IMR-90 (cell line): ENCODE measurements at regions of chr5 and their contacts with region 1.

Region 1: GRCh38 chr5:124748687-124749594 is 2.5 kb upstream of the ZNF608 start:
- DNase-seq: peak; percentile 91
- ATAC-seq: peak; percentile 79
- H3K4me3 ChIP-seq: peak overlapping the region; percentile 67
- H3K27ac ChIP-seq: peak overlapping the region; percentile 86
- H3K4me1 ChIP-seq: no peaks in the 10 kb centered on the region
- H3K27me3 ChIP-seq: no peaks in the 10 kb centered on the region
- CTCF ChIP-seq: no peak
- POLR2A ChIP-seq: no peak
- RAD21 ChIP-seq: 0 out of 2 replicates have a peak, but pooled peaks have one; percentile 10

Region 2: DNA sequence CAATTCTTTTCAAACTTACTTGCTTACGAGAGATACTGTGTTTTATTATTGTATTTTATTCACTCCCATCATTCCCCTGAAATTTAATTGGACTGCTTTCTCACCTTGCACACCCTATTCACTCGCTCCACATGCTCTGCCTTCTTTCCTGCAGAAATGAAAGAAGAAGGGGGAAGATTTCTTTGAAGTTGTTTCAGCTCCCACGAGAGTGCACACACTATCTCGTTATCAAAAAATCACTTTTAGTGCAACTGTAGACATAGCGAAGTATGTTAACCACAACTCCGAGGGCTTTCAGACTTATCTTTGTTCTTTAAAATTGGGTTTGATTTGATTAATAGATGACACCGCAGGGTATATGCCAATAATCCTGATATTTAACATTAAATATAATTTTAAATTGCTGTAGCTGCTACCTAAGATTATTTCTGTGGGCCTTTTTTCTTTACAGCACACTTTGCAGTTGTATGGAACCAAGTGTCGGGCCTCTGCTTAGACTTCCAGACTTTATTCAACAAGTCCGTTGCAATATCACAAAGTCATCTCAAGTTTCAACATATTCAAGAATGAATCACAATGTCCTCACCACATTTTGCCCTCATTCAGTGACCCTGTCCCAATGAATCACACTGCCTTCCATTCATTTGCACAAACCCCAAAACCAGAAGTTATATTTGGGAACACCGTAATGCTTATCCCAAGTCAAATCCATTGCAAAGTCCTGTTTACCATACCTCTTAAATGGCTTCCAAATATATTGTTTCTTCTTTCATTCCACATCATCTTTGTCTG is 797.6 kb before region 1 on chr5:
- CTCF ChIA-PET with region 1: no interaction called
- POLR2A ChIA-PET with region 1: no interaction called
- dilution Hi-C with region 1: no loop called
- in situ Hi-C with region 1: no loop called
- intact Hi-C with region 1: loop called (anchors 5 kb)
- DNase-seq: peak; percentile 96
- ATAC-seq: peak; percentile 94
- H3K4me3 ChIP-seq: no peak overlapping the region
- H3K27ac ChIP-seq: no peak overlapping the region
- H3K4me1 ChIP-seq: peaks cover 2% of the 10 kb centered on the region; the same call in 1 of the 2 replicates
- H3K27me3 ChIP-seq: no peaks in the 10 kb centered on the region; the same call in 1 of the 2 replicates
- CTCF ChIP-seq: no peak
- POLR2A ChIP-seq: no peak
- RAD21 ChIP-seq: no peak

Region 3: GRCh38 chr5:124453221-124454051 is 295.5 kb before region 1 on chr5:
- CTCF ChIA-PET with region 1: no interaction called
- POLR2A ChIA-PET with region 1: no interaction called
- dilution Hi-C with region 1: no loop called
- in situ Hi-C with region 1: loop called (anchors 10 kb)
- intact Hi-C with region 1: loop called (anchors 5 kb)
- DNase-seq: peak; percentile 89
- ATAC-seq: peak; percentile 60
- H3K4me3 ChIP-seq: no peak overlapping the region
- H3K27ac ChIP-seq: 0 out of 2 replicates have a peak overlapping the region, but pooled peaks have one; percentile 34
- H3K4me1 ChIP-seq: peaks cover 16% of the 10 kb centered on the region
- H3K27me3 ChIP-seq: peaks cover 5% of the 10 kb centered on the region
- CTCF ChIP-seq: no peak
- POLR2A ChIP-seq: no peak
- RAD21 ChIP-seq: no peak

Region 4: GRCh38 chr5:124655922-124656511 is 92.9 kb before region 1 on chr5:
- CTCF ChIA-PET with region 1: no interaction called
- POLR2A ChIA-PET with region 1: interaction called, 3 read pairs
- dilution Hi-C with region 1: no loop called
- in situ Hi-C with region 1: no loop called
- intact Hi-C with region 1: loop called (anchors 1 kb)
- DNase-seq: peak; percentile 94
- ATAC-seq: peak; percentile 43
- H3K4me3 ChIP-seq: peak overlapping the region; percentile 11; the same call in 1 of the 2 replicates
- H3K27ac ChIP-seq: peak overlapping the region; percentile 88
- H3K4me1 ChIP-seq: peaks cover 29% of the 10 kb centered on the region
- H3K27me3 ChIP-seq: no peaks in the 10 kb centered on the region
- CTCF ChIP-seq: no peak
- POLR2A ChIP-seq: no peak
- RAD21 ChIP-seq: peak; percentile 37

Region 5: DNA sequence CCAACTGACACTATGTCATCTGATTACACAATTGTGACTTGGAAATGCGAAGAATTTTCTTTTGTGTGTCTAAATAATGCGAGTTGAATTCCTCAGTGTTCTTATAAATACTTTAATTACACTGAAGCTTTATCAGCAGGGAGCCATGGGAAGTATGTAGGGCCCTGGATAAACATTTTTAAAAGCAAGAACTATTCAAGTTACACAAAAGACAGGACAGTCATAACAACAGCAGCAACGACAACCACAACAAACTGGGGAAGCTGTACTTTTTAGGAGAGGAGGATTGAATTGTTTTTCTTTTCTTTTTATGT is 247.8 kb after region 1 on chr5:
- CTCF ChIA-PET with region 1: no interaction called
- POLR2A ChIA-PET with region 1: interaction called, 3 read pairs
- dilution Hi-C with region 1: no loop called
- in situ Hi-C with region 1: no loop called
- intact Hi-C with region 1: loop called (anchors 2 kb)
- DNase-seq: peak; percentile 56
- ATAC-seq: peak; percentile 68
- H3K4me3 ChIP-seq: no peak overlapping the region
- H3K27ac ChIP-seq: no peak overlapping the region; the same call in 1 of the 2 replicates
- H3K4me1 ChIP-seq: peaks cover 13% of the 10 kb centered on the region
- H3K27me3 ChIP-seq: no peaks in the 10 kb centered on the region
- CTCF ChIP-seq: no peak
- POLR2A ChIP-seq: no peak
- RAD21 ChIP-seq: no peak

Region 6: DNA sequence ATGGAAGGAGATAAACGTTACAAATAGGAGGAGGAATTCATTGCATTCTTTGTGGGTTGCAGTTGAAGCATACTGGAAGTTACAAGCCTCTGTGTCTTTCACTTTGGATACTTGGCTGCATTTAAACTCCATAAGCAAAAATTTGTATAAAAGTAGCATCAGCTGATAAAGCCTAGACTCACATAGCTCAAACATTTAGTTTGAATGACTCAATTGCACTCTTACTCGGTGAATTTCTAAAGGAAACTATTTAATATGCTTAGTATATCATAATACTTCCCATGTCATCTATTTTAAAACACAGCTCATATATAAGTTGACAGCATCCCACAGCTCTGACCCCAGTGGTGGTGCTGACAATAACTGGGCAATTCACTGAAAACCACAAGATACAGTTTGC is 594.1 kb after region 1 on chr5:
- CTCF ChIA-PET with region 1: no interaction called
- POLR2A ChIA-PET with region 1: no interaction called
- dilution Hi-C with region 1: no loop called
- in situ Hi-C with region 1: no loop called
- intact Hi-C with region 1: loop called (anchors 5 kb)
- DNase-seq: peak; percentile 84
- ATAC-seq: peak; percentile 91
- H3K4me3 ChIP-seq: no peak overlapping the region
- H3K27ac ChIP-seq: no peak overlapping the region
- H3K4me1 ChIP-seq: peaks cover 2% of the 10 kb centered on the region; the same call in 1 of the 2 replicates
- H3K27me3 ChIP-seq: no peaks in the 10 kb centered on the region; the same call in 1 of the 2 replicates
- CTCF ChIP-seq: no peak
- POLR2A ChIP-seq: no peak
- RAD21 ChIP-seq: no peak

Region 7: GRCh38 chr5:125550274-125550673 is 801.3 kb after region 1 on chr5:
- CTCF ChIA-PET with region 1: no interaction called
- POLR2A ChIA-PET with region 1: no interaction called
- dilution Hi-C with region 1: no loop called
- in situ Hi-C with region 1: no loop called
- intact Hi-C with region 1: loop called (anchors 5 kb)
- DNase-seq: peak; percentile 74
- ATAC-seq: peak; percentile 72
- H3K4me3 ChIP-seq: no peak overlapping the region
- H3K27ac ChIP-seq: no peak overlapping the region
- H3K4me1 ChIP-seq: peaks cover 5% of the 10 kb centered on the region
- H3K27me3 ChIP-seq: no peaks in the 10 kb centered on the region
- CTCF ChIP-seq: no peak
- POLR2A ChIP-seq: no peak
- RAD21 ChIP-seq: no peak